Esophagus muscularis mucosa (tissue), 4 donors: ENCODE measurements at regions of chr19 and their contacts with region 1.

Region 1: GRCh38 chr19:33406521-33407139 is 33.1 kb downstream of the CEBPG start:
- DNase-seq: peak; percentile 95
- H3K4me3 ChIP-seq: no peak overlapping the region
- H3K27ac ChIP-seq: no peak overlapping the region
- H3K4me1 ChIP-seq: peaks cover 4 to 27% (median 16%) of the 10 kb centered on the region in 4 donors
- H3K27me3 ChIP-seq: no peaks in the 10 kb centered on the region
- CTCF ChIP-seq: peak; percentile 95 to 97 (median 97)
- EP300 ChIP-seq: no peak
- POLR2A ChIP-seq: no peak

Region 2: GRCh38 chr19:33143897-33144405 is 262.7 kb before region 1 on chr19:
- intact Hi-C with region 1: loop called (anchors 5 kb)
- DNase-seq: no peak
- H3K4me3 ChIP-seq: no peak overlapping the region
- H3K27ac ChIP-seq: no peak overlapping the region
- H3K4me1 ChIP-seq: peaks cover 0 to 8% (median 6%) of the 10 kb centered on the region in 4 donors
- H3K27me3 ChIP-seq: peaks cover 0 to 15% (median 0%) of the 10 kb centered on the region in 4 donors
- CTCF ChIP-seq: peak in 2 of 3 experiments; percentile 91 to 92
- EP300 ChIP-seq: no peak
- POLR2A ChIP-seq: no peak

Region 3: GRCh38 chr19:33241530-33242101 is 165.0 kb before region 1 on chr19:
- intact Hi-C with region 1: loop called (anchors 2 kb)
- DNase-seq: no peak
- H3K4me3 ChIP-seq: no peak overlapping the region
- H3K27ac ChIP-seq: no peak overlapping the region
- H3K4me1 ChIP-seq: peaks cover 0 to 11% (median 8%) of the 10 kb centered on the region in 4 donors
- H3K27me3 ChIP-seq: peaks cover 0 to 33% (median 0%) of the 10 kb centered on the region in 4 donors
- CTCF ChIP-seq: peak; percentile 54 to 73 (median 70)
- EP300 ChIP-seq: no peak
- POLR2A ChIP-seq: no peak